Caco-2 (cell line): ENCODE measurements at regions of chr6 and their contacts with region 1.

Region 1: GRCh38 chr6:83199863-83200225 is 6.7 kb downstream of the RWDD2A start:
- DNase-seq: no peak
- H3K4me3 ChIP-seq: no peak overlapping the region
- H3K4me3 Mint-ChIP-seq: no peak overlapping the region
- H3K27ac Mint-ChIP-seq: no peak overlapping the region
- H3K4me1 ChIP-seq: peaks cover 7% of the 10 kb centered on the region; the same call in 1 of the 2 replicates
- H3K4me1 Mint-ChIP-seq: peaks cover 28% of the 10 kb centered on the region
- H3K27me3 ChIP-seq: no peaks in the 10 kb centered on the region
- H3K27me3 Mint-ChIP-seq: no peaks in the 10 kb centered on the region
- CTCF ChIP-seq: no peak

Region 2: GRCh38 chr6:82247634-82248232 is 952.1 kb before region 1 on chr6 and contains the start of gene IBTK:
- CTCF ChIA-PET with region 1: no interaction called
- POLR2A ChIA-PET with region 1: no interaction called
- intact Hi-C with region 1: loop called (anchors 10 kb)
- DNase-seq: peak; percentile 95 to 97
- H3K4me3 ChIP-seq: peak within 1 kb of the TSS; percentile 74
- H3K4me3 Mint-ChIP-seq: peak within 1 kb of the TSS; percentile 90
- H3K27ac Mint-ChIP-seq: peak within 1 kb of the TSS; percentile 96
- H3K4me1 ChIP-seq: peaks cover 28% of the 10 kb centered on the region
- H3K4me1 Mint-ChIP-seq: peaks cover 20% of the 10 kb centered on the region
- H3K27me3 ChIP-seq: no peaks in the 10 kb centered on the region
- H3K27me3 Mint-ChIP-seq: no peaks in the 10 kb centered on the region
- CTCF ChIP-seq: no peak
- total RNA-seq, gene IBTK: 29.4 and 30.3 TPM in 2 replicates

Region 3: GRCh38 chr6:82882363-82883023 is 317.4 kb before region 1 on chr6:
- CTCF ChIA-PET with region 1: no interaction called
- POLR2A ChIA-PET with region 1: no interaction called
- intact Hi-C with region 1: no loop called
- DNase-seq: no peak
- H3K4me3 ChIP-seq: no peak overlapping the region
- H3K4me3 Mint-ChIP-seq: no peak overlapping the region
- H3K27ac Mint-ChIP-seq: no peak overlapping the region
- H3K4me1 ChIP-seq: no peaks in the 10 kb centered on the region
- H3K4me1 Mint-ChIP-seq: no peaks in the 10 kb centered on the region
- H3K27me3 ChIP-seq: no peaks in the 10 kb centered on the region
- H3K27me3 Mint-ChIP-seq: peaks cover 4% of the 10 kb centered on the region
- CTCF ChIP-seq: no peak

Region 4: GRCh38 chr6:83429269-83429668 is 229.4 kb after region 1 on chr6:
- CTCF ChIA-PET with region 1: no interaction called
- POLR2A ChIA-PET with region 1: no interaction called
- intact Hi-C with region 1: no loop called
- DNase-seq: no peak
- H3K4me3 ChIP-seq: peak overlapping the region; percentile 79
- H3K4me3 Mint-ChIP-seq: peak overlapping the region; percentile 100
- H3K27ac Mint-ChIP-seq: peak overlapping the region; percentile 99
- H3K4me1 ChIP-seq: peaks cover 33% of the 10 kb centered on the region
- H3K4me1 Mint-ChIP-seq: peaks cover 25% of the 10 kb centered on the region
- H3K27me3 ChIP-seq: no peaks in the 10 kb centered on the region
- H3K27me3 Mint-ChIP-seq: no peaks in the 10 kb centered on the region
- CTCF ChIP-seq: no peak